ENCODE measurements at regions of chrX and their contacts with region 1.

Region 1: DNA sequence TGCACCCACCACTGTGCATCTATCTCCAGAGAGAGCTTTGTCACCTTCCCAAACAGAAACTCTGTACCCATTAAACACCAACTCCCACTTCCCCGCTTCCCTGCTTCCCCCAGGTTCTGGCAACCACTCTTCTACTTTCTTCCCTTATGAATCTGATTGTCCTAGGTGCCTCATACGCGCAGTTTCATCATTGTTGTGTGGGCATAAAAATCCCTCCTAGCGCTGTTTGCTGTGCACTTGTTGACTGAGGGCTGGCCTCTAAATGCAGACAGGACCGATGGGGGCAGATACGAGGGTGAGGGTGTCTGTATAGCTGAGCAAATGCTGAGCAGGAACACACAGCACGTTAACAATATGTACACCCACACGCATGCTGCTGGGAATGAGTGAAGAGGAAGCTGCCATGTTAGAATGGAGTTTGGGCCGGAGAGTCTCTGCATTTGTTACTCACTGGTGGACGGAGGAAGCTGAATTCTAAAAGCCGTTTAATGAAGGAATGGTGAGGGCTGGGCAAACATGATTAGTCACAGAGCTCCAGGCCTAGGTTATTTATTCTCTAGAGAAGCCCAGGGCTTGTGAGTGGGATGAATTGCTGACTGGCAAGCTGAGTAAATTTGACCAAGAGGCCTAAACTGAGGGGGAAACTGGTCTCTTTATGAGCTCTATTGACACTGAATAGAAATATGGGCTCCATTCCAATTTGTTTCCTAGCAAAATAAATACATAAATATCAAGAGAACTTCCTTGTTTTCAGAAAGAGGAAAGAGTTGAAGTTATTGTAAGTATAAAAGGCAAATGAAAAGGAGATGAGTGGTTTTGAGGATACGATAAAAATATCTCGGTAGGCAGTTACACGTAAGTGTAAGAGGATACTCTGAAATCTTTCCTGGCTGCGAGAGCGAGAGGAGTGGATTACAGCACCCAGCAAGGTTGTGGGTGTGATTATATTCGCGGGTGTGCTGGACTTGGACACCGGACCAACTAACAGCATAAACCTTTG is 95.9 kb upstream of the RPS6KA3 start:
- DNase-seq: peak; percentile 30 to 94
- H3K4me3 ChIP-seq: peak overlapping the region; percentile 51
- H3K27ac ChIP-seq: peak overlapping the region; percentile 99
- H3K4me1 ChIP-seq: peaks cover 50% of the 10 kb centered on the region
- H3K27me3 ChIP-seq: no peaks in the 10 kb centered on the region
- CTCF ChIP-seq: no peak

Region 2: DNA sequence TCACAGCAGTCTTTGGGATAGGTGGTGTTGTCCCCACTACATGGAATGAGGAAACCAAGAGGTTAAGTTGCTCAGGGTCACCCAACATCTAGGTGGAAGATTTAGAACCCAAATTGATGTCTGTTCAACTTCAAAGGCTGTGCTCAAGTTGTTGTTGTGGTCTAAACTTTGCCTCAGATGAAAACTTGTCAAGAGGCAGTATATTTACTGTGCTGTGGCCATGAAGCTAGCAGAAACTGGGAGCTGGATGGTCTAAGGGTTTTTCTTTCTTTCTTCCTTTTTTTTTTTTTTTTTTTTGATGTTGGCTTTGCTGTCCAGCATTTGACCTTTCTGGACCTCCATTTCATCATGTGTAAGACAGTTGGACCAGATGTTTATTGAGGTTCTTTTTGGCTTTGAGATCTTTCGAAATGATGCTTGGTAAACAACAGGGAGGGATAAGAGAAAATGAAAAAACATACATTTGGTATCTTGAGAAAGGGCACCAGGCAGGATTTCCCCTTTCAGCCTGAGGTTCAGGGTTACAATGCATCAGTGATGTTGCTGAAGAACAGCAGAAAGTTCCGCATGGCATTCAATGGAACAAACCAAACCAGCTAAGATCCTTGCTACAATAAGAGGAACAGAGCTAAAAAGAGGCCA is 70.3 kb after region 1 on chrX:
- CTCF ChIA-PET with region 1: no interaction called
- POLR2A ChIA-PET with region 1: interaction called, 3 read pairs
- intact Hi-C with region 1: loop called (anchors 2 kb)
- DNase-seq: no peak
- H3K4me3 ChIP-seq: no peak overlapping the region
- H3K27ac ChIP-seq: no peak overlapping the region
- H3K4me1 ChIP-seq: peaks cover 7% of the 10 kb centered on the region; the same call in 1 of the 2 replicates
- H3K27me3 ChIP-seq: no peaks in the 10 kb centered on the region
- CTCF ChIP-seq: no peak

Measured in PC-9 (cell line).